OCI-LY7 (cell line): ENCODE measurements at regions of chr4 and their contacts with region 1.

Region 1: DNA sequence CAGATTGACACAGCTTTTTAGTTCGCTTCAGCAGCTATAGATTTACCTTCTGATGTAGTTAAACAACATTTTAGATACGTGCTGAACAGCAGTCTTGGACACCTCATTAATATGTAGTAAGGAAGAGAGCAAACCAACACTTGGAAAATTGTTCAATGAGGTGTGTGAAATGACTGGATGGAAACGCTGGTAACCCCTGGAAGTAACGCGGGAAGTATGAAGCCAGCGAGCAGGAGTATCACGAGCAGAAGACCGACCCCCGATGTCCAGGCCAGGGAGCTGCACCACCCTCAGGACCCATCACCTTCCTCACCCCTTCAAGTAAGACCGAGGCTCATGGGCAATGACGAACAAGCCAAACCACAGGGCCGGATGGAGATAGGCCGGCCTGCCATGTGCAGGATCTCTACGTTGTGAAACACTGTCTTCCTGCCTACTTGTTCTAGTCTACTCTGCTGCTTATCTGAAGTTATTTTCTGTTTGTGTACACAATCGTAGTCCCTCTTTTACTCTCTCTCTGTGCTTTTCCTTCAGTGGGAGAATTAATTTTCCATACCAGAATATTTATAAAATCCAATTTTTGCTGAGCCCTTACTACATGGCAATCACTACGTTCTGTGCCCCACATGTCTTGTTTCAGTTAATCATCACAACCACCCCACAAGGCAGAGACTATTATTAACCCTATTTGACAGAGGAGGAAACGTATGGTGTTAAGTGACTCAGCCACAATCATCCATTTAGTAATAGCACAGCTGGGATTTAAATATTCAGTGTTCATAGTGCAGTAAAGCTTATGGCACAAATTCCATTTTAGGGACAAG is 221.7 kb downstream of the APBB2 start:
- DNase-seq: peak; percentile 90
- H3K4me3 ChIP-seq: peak overlapping the region; percentile 28
- H3K27ac ChIP-seq: peak overlapping the region; percentile 100
- H3K4me1 ChIP-seq: peaks cover 89% of the 10 kb centered on the region
- CTCF ChIP-seq: no peak

Region 2: DNA sequence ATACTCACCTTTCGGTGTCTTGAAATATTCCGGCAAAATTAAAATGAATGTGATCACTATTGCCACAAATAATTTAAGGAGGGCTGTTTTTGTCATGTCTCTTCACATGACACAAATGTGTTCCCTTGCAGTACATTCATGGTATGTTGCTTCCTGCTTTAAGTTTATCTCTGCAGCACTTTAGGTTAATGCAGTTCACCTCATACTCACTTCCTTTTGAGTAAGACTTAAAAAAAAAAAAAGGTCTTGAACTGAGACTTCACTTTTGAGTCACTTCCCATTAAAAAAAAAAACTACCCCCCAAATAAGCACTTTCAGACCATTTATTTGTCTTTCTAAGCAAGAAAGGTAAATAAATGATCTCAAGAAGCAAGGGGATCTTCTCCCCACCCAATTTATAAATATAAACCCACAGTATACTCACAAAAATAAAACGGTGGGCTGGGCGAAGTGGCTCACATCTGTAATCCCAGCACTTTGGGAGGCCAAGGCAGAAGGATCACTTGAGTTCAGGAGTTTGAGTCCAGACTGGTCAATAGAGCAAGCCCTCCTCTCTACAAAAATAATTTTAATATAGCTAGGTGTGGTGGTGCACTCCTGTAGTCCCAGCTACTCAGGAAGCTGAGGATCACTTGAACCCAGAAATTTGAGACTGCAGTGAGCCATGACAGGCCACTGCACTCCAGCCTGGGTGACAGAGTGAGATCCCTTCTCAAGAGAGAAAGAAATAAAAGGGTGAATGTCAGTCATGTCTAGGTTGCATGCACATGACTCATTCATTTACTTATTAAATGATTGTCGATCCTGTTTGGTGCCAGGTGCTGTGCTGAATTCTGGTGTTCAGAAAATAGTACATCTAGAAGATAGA is 1960.2 kb before region 1 on chr4 and contains the start of gene TMEM156:
- CTCF ChIA-PET with region 1: no interaction called
- POLR2A ChIA-PET with region 1: no interaction called
- intact Hi-C with region 1: loop called (anchors 5 kb)
- DNase-seq: peak; percentile 88
- H3K4me3 ChIP-seq: peak within 1 kb of the TSS; percentile 79
- H3K27ac ChIP-seq: peak within 1 kb of the TSS; percentile 91
- H3K4me1 ChIP-seq: peaks cover 67% of the 10 kb centered on the region
- CTCF ChIP-seq: no peak
- total RNA-seq, gene TMEM156: 25.0 and 29.0 TPM in 2 replicates

Region 3: GRCh38 chr4:40199999-40200874 is 792.4 kb before region 1 on chr4:
- CTCF ChIA-PET with region 1: no interaction called
- POLR2A ChIA-PET with region 1: no interaction called
- intact Hi-C with region 1: loop called (anchors 5 kb)
- DNase-seq: peak; percentile 83
- H3K4me3 ChIP-seq: peak overlapping the region; percentile 79
- H3K27ac ChIP-seq: peak overlapping the region; percentile 93
- H3K4me1 ChIP-seq: peaks cover 51% of the 10 kb centered on the region
- CTCF ChIP-seq: no peak

Region 4: DNA sequence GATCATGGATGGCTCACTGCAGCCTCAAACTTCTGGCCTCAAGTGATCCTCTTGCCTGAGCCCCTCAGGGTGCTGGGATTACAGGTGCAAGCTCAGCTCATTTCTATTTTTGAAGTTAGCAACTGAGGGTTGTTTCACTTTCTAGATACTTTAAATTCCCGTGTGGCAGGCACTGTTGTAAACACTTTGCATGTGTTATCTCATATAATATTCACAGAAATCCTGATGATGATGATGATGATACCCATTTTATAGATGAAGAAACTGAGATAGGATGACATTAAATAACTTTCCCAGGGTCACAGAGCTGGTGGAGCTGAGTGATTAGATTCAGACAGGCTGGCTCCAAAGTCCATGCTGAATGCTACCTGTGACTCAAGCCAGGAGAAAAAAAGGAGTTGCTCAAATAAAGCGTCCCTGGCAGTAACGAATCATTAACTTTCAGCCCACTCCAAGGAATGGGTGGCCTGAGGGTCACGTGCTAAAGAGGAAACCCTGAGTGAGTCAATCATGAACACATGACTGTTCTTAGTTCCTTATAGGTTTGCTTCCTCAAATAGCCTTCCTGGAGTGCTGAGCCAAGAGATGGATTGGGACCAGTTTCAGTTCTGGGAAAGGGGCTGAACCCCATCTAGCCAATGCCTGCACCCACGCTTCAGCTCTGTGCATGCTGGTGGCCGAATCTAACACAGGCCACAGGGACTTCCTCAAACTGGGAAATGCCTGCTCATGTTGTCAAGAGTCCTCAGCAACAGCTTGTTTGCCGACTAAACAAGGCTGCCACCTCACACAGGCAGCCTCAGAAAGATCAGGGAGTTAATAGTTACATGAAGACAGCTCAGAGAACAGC is 415.8 kb before region 1 on chr4:
- CTCF ChIA-PET with region 1: no interaction called
- POLR2A ChIA-PET with region 1: interaction called, 3 read pairs
- intact Hi-C with region 1: loop called (anchors 10 kb)
- DNase-seq: peak; percentile 56
- H3K4me3 ChIP-seq: no peak overlapping the region
- H3K27ac ChIP-seq: peak overlapping the region; percentile 25
- H3K4me1 ChIP-seq: peaks cover 47% of the 10 kb centered on the region
- CTCF ChIP-seq: no peak

Region 5: DNA sequence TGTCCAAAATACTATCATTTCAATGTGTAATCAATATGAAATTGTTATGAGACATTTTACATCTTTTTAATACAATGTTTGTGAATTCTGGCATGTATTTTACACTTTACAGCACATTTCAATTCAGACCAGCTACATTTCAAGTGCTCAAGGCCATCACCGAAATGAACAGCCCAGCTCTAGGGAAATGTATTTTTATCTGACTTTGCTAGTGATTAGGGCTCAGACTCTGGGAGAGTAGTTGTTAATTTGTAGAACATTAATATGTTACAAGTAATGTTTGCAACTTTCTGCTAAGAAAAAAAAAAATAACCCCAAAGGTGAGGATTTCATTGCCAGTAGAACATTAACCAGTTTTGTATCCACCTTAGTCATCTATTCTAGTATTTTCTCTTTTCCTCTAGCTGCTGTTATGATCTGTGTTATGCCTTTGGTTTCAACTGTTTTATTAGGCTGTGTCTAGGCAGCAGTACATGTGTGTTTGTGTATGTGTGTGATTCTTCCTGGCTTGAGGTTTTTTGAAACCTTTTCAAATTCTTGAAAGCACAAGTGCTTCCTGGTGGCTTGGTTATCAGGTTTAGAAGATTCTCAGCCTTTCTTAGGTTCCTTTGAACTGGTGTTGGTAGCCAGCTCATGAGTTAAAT is 117.1 kb before region 1 on chr4:
- CTCF ChIA-PET with region 1: no interaction called
- POLR2A ChIA-PET with region 1: no interaction called
- intact Hi-C with region 1: no loop called
- DNase-seq: no peak
- H3K4me3 ChIP-seq: no peak overlapping the region
- H3K27ac ChIP-seq: no peak overlapping the region
- H3K4me1 ChIP-seq: no peaks in the 10 kb centered on the region
- CTCF ChIP-seq: no peak

Region 6: DNA sequence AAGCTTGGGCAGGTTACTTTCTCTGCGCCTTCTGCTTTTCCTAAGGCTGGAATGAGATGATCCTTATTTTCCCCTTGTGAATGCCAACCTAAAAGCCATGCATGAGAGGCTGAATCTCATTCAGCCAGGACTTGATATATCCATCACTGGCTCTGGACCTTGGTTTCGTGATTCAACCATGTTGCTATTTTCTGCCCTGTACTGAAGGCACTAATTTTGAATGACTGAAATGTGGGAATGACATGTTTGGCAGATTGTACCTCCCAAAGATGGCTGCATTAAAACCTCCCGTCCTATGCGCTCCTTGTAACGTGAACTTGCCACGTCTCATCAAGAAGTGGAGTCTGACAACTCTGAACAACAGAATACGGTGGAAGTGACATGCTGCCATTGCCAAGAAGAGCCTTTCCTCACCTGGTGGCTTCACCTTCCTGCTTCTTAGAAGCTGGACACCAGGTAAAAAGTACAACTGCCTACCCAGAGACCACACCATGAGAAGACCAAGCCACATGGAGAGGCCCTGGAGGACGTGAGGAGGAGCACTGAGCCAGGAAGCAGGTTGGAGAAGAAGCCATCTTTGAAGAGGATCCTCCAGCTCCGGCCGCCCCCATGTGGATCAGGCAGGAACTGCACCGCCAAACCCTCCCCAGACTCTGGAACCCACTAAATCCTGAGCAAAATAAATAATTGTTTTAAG is 68.4 kb before region 1 on chr4:
- CTCF ChIA-PET with region 1: interaction called, 3 read pairs
- POLR2A ChIA-PET with region 1: no interaction called
- intact Hi-C with region 1: loop called (anchors 1 kb)
- DNase-seq: peak; percentile 74
- H3K4me3 ChIP-seq: no peak overlapping the region
- H3K27ac ChIP-seq: no peak overlapping the region
- H3K4me1 ChIP-seq: no peaks in the 10 kb centered on the region
- CTCF ChIP-seq: peak; percentile 94

Region 7: DNA sequence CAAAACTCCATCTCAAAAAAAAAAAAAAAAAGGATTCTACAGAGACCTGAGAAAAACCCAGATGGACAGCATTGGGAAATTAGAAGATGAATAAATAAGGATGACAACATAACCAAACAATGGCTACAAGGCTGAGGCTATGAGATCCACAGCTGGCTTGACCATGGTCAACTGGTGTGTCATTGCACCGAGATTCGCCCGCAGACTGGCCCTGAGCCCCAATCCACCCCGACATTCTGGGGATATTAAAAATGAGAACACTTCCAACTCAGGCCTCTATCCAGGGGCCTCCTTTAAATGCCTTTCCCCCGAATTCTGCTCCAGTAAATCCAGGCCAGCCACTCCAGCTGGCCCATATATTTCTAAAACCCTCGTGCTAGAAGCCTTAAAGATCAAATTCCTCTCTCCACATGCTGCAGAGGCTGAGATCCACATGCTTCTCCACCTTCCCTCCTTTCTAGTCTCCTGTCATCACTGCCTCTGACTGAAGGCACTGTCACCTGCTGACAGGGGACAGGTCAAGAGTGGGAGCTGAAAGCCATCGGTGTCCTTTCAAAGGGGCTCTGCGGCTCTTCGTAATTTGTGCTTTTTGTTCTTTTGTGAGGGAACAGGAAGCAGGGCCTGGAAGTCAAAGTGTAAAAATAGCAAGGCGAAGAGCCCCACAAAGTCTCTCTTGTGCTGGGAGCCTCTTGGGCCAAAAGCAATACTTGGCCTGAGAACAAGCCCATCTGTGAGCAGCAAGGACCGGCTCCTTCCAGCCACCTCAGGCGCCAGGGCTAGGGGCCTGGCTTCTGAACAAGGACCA is 39.2 kb before region 1 on chr4:
- CTCF ChIA-PET with region 1: no interaction called
- POLR2A ChIA-PET with region 1: no interaction called
- intact Hi-C with region 1: no loop called
- DNase-seq: no peak
- H3K4me3 ChIP-seq: no peak overlapping the region
- H3K27ac ChIP-seq: no peak overlapping the region
- H3K4me1 ChIP-seq: peaks cover 11% of the 10 kb centered on the region
- CTCF ChIP-seq: no peak

Region 8: GRCh38 chr4:41174444-41174843 is 181.8 kb after region 1 on chr4:
- CTCF ChIA-PET with region 1: no interaction called
- POLR2A ChIA-PET with region 1: interaction called, 5 read pairs
- intact Hi-C with region 1: loop called (anchors 2 kb)
- DNase-seq: peak; percentile 12
- H3K4me3 ChIP-seq: no peak overlapping the region
- H3K27ac ChIP-seq: no peak overlapping the region
- H3K4me1 ChIP-seq: peaks cover 54% of the 10 kb centered on the region
- CTCF ChIP-seq: no peak

Region 9: DNA sequence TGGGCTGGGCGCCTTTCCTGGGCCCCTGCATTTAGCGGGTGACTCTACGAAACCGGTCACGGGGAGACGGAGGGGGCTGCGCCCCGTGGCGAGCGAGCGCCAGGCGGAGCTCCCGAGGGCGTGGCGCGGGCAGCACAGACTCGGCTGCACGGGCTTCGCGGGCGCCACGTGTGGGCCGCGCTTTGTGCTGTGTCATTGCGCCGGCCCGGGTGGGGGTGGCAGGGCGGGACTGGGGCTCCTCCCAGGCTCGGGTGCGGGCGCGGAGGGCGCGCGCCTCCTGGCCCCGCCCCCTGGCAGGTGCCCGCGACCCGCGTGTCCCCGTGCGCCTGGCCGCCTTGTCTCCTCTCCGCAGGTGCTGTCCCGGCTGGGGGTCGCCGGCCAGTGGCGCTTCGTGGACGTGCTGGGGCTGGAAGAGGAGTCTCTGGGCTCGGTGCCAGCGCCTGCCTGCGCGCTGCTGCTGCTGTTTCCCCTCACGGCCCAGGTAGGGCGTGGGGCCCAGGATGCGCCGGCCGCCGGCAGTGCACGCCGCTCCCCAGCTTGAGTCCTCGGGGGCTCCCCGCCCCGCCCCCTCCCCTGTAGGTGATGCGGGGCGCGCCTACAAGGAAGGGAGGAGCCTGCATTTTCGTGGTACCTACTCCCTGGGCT is 264.7 kb after region 1 on chr4:
- CTCF ChIA-PET with region 1: no interaction called
- POLR2A ChIA-PET with region 1: interaction called, 5 read pairs
- intact Hi-C with region 1: loop called (anchors 1 kb)
- DNase-seq: peak; percentile 79
- H3K4me3 ChIP-seq: peak overlapping the region; percentile 90
- H3K27ac ChIP-seq: peak overlapping the region; percentile 67
- H3K4me1 ChIP-seq: peaks cover 32% of the 10 kb centered on the region
- CTCF ChIP-seq: no peak